CD4-positive, alpha-beta memory T cell (primary cell): ENCODE measurements at regions of chr1 and their contacts with region 1.

Region 1: GRCh38 chr1:62082456-62083363 is 111.9 kb upstream of the L1TD1 start:
- DNase-seq: peak in 4 of 5 donors; percentile 17 to 29 (median 22)
- H3K4me3 ChIP-seq: no peak overlapping the region
- H3K4me3 Mint-ChIP-seq: no peak overlapping the region
- H3K27ac ChIP-seq: no peak overlapping the region
- H3K27ac Mint-ChIP-seq: no peak overlapping the region
- H3K4me1 ChIP-seq: no peaks in the 10 kb centered on the region
- H3K4me1 Mint-ChIP-seq: peaks cover 0 to 2% (median 0%) of the 10 kb centered on the region in 4 donors
- H3K27me3 ChIP-seq: no peaks in the 10 kb centered on the region
- H3K27me3 Mint-ChIP-seq: no peaks in the 10 kb centered on the region

Region 2: DNA sequence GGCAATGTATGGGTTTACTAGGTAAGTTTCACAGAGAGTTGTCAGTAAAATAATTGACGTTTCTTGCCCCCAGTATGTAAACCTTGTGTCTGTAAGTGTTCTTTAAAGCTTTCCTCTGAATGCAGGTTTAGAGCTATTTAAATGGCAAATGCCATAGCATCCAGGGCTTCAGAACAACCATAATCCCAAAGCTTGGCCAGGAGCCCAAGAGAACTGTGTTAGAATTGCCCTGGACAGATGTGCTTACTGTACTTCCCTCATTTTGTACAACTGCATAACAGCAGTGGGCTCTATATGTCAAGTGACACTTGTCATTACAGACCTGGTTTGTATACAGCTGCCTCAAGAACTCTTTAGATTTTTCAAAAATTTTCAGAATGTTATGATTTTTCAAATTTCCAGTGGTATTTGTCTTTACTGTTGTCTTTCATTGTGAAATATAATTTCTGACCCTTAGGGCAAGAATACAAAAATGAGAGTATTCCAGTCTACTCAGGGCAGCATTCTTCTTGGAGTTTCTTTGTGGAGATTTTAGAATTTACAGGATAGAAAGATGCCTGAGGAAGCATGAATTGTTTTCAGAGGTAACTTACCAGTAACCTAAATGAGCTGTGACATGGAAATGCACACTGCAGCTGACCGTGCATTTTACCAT is 24.9 kb before region 1 on chr1:
- CTCF ChIA-PET with region 1: interaction called, 12 read pairs
- POLR2A ChIA-PET with region 1: no interaction called
- intact Hi-C with region 1: no loop called
- DNase-seq: no peak
- H3K4me3 ChIP-seq: no peak overlapping the region
- H3K4me3 Mint-ChIP-seq: no peak overlapping the region
- H3K27ac ChIP-seq: no peak overlapping the region
- H3K27ac Mint-ChIP-seq: peak overlapping the region in 2 of 7 donors; percentile 17 to 53
- H3K4me1 ChIP-seq: no peaks in the 10 kb centered on the region
- H3K4me1 Mint-ChIP-seq: peaks cover 0 to 4% (median 0%) of the 10 kb centered on the region in 4 donors
- H3K27me3 ChIP-seq: no peaks in the 10 kb centered on the region
- H3K27me3 Mint-ChIP-seq: no peaks in the 10 kb centered on the region

Region 3: GRCh38 chr1:62068978-62069377 is 13.7 kb before region 1 on chr1:
- CTCF ChIA-PET with region 1: interaction called, 15 read pairs
- POLR2A ChIA-PET with region 1: no interaction called
- intact Hi-C with region 1: no loop called
- DNase-seq: no peak
- H3K4me3 ChIP-seq: no peak overlapping the region
- H3K4me3 Mint-ChIP-seq: no peak overlapping the region
- H3K27ac ChIP-seq: no peak overlapping the region
- H3K27ac Mint-ChIP-seq: no peak overlapping the region
- H3K4me1 ChIP-seq: no peaks in the 10 kb centered on the region
- H3K4me1 Mint-ChIP-seq: no peaks in the 10 kb centered on the region
- H3K27me3 ChIP-seq: no peaks in the 10 kb centered on the region
- H3K27me3 Mint-ChIP-seq: no peaks in the 10 kb centered on the region

Region 4: GRCh38 chr1:62093261-62093660 is 10.6 kb after region 1 on chr1:
- CTCF ChIA-PET with region 1: interaction called, 59 read pairs
- POLR2A ChIA-PET with region 1: no interaction called
- intact Hi-C with region 1: no loop called
- DNase-seq: no peak
- H3K4me3 ChIP-seq: no peak overlapping the region
- H3K4me3 Mint-ChIP-seq: no peak overlapping the region
- H3K27ac ChIP-seq: no peak overlapping the region
- H3K27ac Mint-ChIP-seq: no peak overlapping the region
- H3K4me1 ChIP-seq: no peaks in the 10 kb centered on the region
- H3K4me1 Mint-ChIP-seq: no peaks in the 10 kb centered on the region
- H3K27me3 ChIP-seq: no peaks in the 10 kb centered on the region
- H3K27me3 Mint-ChIP-seq: no peaks in the 10 kb centered on the region

Region 5: DNA sequence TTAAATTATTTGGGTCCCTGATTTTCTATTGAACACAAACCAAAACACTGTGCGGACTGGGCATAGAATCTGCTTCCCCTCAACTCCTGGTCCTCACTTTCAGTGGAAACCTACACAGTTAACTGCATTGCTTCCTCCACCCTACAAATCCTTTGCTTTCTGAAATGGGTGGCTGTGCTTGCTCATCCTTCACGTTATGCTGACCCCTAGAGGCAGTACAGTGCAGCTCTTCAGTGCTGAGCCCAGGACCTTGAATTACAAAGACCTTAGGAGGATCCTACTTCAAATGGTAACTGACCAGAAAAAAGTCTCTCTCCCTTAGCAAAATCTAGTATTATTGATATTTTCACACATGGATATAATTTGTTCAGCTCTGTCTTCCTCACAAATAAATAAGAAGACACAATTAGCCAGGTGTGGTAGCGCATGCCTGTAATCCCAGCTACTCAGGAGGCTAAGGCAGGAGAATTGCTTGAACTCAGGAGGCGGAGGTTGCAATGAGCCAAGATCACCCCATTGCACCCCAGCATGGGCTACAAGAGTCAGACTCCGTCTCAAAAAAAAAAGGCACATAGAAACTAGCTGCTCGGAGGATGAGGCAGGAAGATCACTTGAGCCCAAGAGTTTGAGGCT is 48.5 kb after region 1 on chr1:
- CTCF ChIA-PET with region 1: interaction called, 14 read pairs
- POLR2A ChIA-PET with region 1: no interaction called
- intact Hi-C with region 1: loop called (anchors 1 kb)
- DNase-seq: peak in 1 of 5 donors; percentile 3
- H3K4me3 ChIP-seq: no peak overlapping the region
- H3K4me3 Mint-ChIP-seq: no peak overlapping the region
- H3K27ac ChIP-seq: no peak overlapping the region
- H3K27ac Mint-ChIP-seq: peak overlapping the region in 1 of 7 donors; percentile 48
- H3K4me1 ChIP-seq: no peaks in the 10 kb centered on the region
- H3K4me1 Mint-ChIP-seq: no peaks in the 10 kb centered on the region
- H3K27me3 ChIP-seq: no peaks in the 10 kb centered on the region
- H3K27me3 Mint-ChIP-seq: no peaks in the 10 kb centered on the region

Region 6: DNA sequence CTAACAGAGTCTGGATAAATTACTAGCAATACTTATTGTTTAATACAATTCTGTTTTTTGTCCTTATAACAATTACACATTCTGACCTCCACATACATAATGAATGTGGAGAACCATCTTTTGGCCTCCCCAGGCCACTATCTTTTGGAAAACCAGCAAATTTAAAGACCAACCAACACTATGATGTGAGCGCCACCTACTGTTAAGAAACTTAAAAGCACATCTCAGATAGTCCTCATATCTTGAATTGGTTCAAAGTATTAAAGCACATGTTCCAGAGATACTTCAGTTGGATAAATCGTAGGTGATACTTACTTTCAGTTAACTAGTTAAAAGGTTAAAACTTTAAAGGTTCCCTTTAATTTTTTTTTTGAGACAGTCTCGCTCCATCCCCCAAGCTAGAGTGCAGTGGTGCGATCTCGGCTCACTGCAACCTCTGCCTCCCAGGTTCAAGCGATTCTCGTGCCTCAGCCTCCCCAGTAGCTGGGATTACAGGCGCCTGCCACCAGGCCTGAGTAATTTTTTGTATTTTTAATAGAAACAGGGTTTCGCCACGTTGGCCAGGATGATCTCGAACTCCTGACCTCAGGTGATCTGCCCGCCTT is 324.8 kb after region 1 on chr1:
- CTCF ChIA-PET with region 1: interaction called, 10 read pairs
- POLR2A ChIA-PET with region 1: no interaction called
- intact Hi-C with region 1: loop called (anchors 1 kb)
- DNase-seq: peak in 4 of 5 donors; percentile 37 to 47 (median 42)
- H3K4me3 ChIP-seq: no peak overlapping the region
- H3K4me3 Mint-ChIP-seq: no peak overlapping the region
- H3K27ac ChIP-seq: no peak overlapping the region
- H3K27ac Mint-ChIP-seq: peak overlapping the region in 1 of 7 donors; percentile 41
- H3K4me1 ChIP-seq: no peaks in the 10 kb centered on the region
- H3K4me1 Mint-ChIP-seq: no peaks in the 10 kb centered on the region
- H3K27me3 ChIP-seq: no peaks in the 10 kb centered on the region
- H3K27me3 Mint-ChIP-seq: no peaks in the 10 kb centered on the region